ENCODE measurements at regions of chr2 and their contacts with region 1.

Region 1: DNA sequence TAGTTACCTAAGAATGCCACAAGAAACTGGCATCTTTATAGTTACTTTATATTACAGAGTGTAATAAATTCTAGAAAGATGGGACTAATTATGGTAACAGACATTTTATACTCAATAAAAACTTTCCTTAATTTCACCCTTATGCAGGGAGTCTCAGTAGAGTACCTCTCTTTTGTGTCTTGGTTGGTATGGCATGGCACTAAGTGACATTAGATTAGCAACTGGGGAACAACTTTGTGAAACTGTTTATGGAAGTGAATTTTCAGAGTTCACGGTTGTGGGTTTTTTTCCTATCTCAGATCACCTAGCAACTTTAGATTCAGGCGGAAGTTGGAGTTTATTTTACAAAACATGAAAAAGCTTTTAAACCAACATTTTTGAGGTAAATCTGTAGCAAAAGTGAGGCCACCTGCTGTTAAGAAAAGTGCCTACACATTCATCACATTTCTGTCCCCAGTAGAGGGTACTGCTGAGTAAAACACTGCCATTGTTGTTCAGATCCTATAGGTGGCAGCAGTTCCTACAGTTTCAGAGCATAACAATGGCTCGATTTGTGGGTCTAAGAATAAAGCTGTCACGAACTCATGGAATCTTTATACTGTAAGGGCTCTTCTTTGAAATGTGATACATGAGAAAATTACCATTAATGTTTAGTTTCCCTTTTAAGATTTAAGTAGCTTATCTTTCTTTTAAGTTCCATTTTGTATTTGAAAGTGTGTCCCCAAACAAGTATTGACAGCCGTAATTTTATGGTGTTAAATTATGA is 117.6 kb downstream of the CAMKMT start:
- DNase-seq: peak in 8 of 9 donors; percentile 23 to 79 (median 68)
- ATAC-seq: peak; percentile 100
- H3K4me3 ChIP-seq: no peak overlapping the region
- H3K4me3 Mint-ChIP-seq: peak overlapping the region in 1 of 10 donors; percentile 8
- H3K27ac ChIP-seq: no peak overlapping the region
- H3K27ac Mint-ChIP-seq: peak overlapping the region in 5 of 9 donors; percentile 5 to 55 (median 38)
- H3K4me1 ChIP-seq: peaks cover 0 to 4% of the 10 kb centered on the region in 2 donors
- H3K4me1 Mint-ChIP-seq: peaks cover 0 to 11% (median 6%) of the 10 kb centered on the region in 7 donors
- H3K27me3 ChIP-seq: no peaks in the 10 kb centered on the region
- H3K27me3 Mint-ChIP-seq: no peaks in the 10 kb centered on the region

Region 2: GRCh38 chr2:43995733-43996533 is 483.4 kb before region 1 on chr2 and contains the start of gene LRPPRC:
- CTCF ChIA-PET with region 1: no interaction called
- POLR2A ChIA-PET with region 1: no interaction called
- intact Hi-C with region 1: no loop called
- DNase-seq: peak; percentile 69 to 95 (median 90)
- ATAC-seq: peak; percentile 98
- H3K4me3 ChIP-seq: peak within 1 kb of the TSS; percentile 98
- H3K4me3 Mint-ChIP-seq: peak within 1 kb of the TSS; percentile 89 to 99 (median 90)
- H3K27ac ChIP-seq: peak within 1 kb of the TSS; percentile 84
- H3K27ac Mint-ChIP-seq: peak within 1 kb of the TSS; percentile 95 to 100 (median 97)
- H3K4me1 ChIP-seq: peaks cover 9 to 25% of the 10 kb centered on the region in 2 donors
- H3K4me1 Mint-ChIP-seq: peaks cover 34 to 62% (median 52%) of the 10 kb centered on the region in 7 donors
- H3K27me3 ChIP-seq: no peaks in the 10 kb centered on the region
- H3K27me3 Mint-ChIP-seq: peaks cover 0 to 1% (median 0%) of the 10 kb centered on the region in 5 donors
- total RNA-seq, gene LRPPRC: 54.3 to 92.7 (median 71.2) TPM

Region 3: GRCh38 chr2:44244129-44244871 is 235.0 kb before region 1 on chr2:
- CTCF ChIA-PET with region 1: no interaction called
- POLR2A ChIA-PET with region 1: no interaction called
- intact Hi-C with region 1: loop called in 1 of 2 experiments (anchors 1 kb)
- DNase-seq: peak; percentile 12 to 75 (median 64)
- ATAC-seq: peak; percentile 96
- H3K4me3 ChIP-seq: peak overlapping the region; percentile 55
- H3K4me3 Mint-ChIP-seq: peak overlapping the region; percentile 71 to 95 (median 87)
- H3K27ac ChIP-seq: peak overlapping the region; percentile 64
- H3K27ac Mint-ChIP-seq: peak overlapping the region in 8 of 9 donors; percentile 39 to 89 (median 74)
- H3K4me1 ChIP-seq: peaks cover 6 to 9% of the 10 kb centered on the region in 2 donors
- H3K4me1 Mint-ChIP-seq: peaks cover 7 to 41% (median 33%) of the 10 kb centered on the region in 7 donors
- H3K27me3 ChIP-seq: no peaks in the 10 kb centered on the region
- H3K27me3 Mint-ChIP-seq: peaks cover 0 to 7% (median 0%) of the 10 kb centered on the region in 5 donors

Region 4: DNA sequence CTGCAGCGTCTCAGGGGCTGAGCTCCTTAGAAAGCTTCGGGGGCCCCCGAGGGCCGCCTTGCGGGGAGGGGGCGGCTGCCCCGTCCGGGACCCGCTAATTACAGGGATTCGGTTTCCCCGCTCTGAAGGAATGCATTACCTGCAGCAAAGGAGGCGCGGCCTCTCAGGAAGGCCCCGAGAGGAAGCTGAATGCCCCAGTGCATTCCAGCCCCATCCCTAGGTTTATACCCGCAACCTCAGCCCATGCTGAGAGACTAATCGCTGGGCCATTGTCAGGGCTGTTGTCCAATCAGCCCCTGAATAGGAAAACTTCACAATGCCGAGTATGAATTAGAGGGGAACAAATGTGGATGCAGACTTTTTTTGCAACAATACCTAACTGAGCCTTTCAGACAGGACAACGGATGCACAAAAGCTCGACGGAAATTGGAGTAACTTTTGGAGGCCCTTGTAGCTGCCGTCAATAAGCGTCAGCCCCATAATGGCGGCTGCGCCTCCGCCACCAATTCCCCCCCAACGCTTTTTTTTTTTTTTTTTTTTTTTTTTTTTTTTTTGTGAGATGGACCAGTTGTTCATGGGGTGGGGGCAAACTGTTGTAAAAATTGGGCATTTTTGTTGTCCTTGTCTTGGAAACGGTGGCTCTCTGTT is 323.6 kb after region 1 on chr2:
- CTCF ChIA-PET with region 1: no interaction called
- POLR2A ChIA-PET with region 1: no interaction called
- intact Hi-C with region 1: loop called in 1 of 2 experiments (anchors 10 kb)
- DNase-seq: no peak
- ATAC-seq: no peak
- H3K4me3 ChIP-seq: no peak overlapping the region
- H3K4me3 Mint-ChIP-seq: peak overlapping the region in 7 of 10 donors; percentile 18 to 80 (median 36)
- H3K27ac ChIP-seq: no peak overlapping the region
- H3K27ac Mint-ChIP-seq: no peak overlapping the region
- H3K4me1 ChIP-seq: peaks cover 0 to 7% of the 10 kb centered on the region in 2 donors
- H3K4me1 Mint-ChIP-seq: peaks cover 0 to 23% (median 18%) of the 10 kb centered on the region in 7 donors
- H3K27me3 ChIP-seq: peaks cover 4 to 23% of the 10 kb centered on the region in 2 donors
- H3K27me3 Mint-ChIP-seq: peaks cover 77 to 91% (median 87%) of the 10 kb centered on the region in 5 donors

Region 5: DNA sequence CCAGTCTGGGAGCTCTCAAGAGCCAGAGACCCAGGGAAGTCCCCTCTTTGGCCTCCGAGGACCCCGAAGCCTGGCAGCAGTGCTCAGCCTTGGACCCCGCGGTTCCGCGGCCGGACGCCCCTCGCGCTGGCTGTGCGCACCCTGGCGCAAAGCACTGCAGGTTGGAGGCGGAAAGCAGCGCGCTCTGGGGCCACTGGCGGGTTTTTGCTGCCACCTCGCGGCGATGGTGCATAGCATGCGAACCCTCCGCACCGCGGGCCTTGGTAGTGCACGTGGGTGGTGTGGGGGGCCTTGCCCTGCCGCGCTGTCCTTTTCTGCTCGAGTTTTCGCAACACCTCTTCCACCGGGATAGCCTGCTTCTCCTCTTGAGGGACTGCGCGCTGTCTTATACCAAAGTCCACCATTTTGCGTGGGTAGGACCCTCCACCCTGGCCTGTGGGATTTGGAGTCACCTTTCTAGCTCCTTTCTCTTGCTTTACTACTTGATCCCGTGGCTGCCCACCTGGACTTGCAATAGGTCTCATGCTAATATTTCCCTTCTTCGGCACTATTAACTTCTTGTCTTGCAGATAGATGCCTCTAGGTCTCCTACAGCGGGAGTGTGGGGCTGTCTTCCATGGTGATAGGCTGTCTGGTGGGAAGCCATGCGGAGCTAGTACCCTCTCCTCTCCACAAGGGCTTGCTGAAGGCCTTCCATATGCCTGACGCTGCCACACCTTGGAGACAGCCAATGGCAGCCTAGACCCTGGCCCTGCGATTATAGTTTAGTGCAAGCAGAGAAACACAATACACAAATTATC is 476.5 kb after region 1 on chr2:
- CTCF ChIA-PET with region 1: interaction called, 16 read pairs
- POLR2A ChIA-PET with region 1: no interaction called
- intact Hi-C with region 1: loop called (anchors 1 kb)
- DNase-seq: peak; percentile 25 to 80 (median 64)
- ATAC-seq: peak; percentile 79
- H3K4me3 ChIP-seq: no peak overlapping the region
- H3K4me3 Mint-ChIP-seq: peak overlapping the region in 7 of 10 donors; percentile 5 to 72 (median 35)
- H3K27ac ChIP-seq: no peak overlapping the region
- H3K27ac Mint-ChIP-seq: peak overlapping the region in 1 of 9 donors; percentile 62
- H3K4me1 ChIP-seq: peaks cover 0 to 10% of the 10 kb centered on the region in 2 donors
- H3K4me1 Mint-ChIP-seq: peaks cover 13 to 32% (median 20%) of the 10 kb centered on the region in 7 donors
- H3K27me3 ChIP-seq: no peaks in the 10 kb centered on the region
- H3K27me3 Mint-ChIP-seq: peaks cover 50 to 77% (median 65%) of the 10 kb centered on the region in 5 donors

Region 6: GRCh38 chr2:45494269-45494977 is 1015.1 kb after region 1 on chr2:
- CTCF ChIA-PET with region 1: no interaction called
- POLR2A ChIA-PET with region 1: no interaction called
- intact Hi-C with region 1: loop called in 1 of 2 experiments (anchors 10 kb)
- DNase-seq: peak in 6 of 9 donors; percentile 17 to 46 (median 28)
- ATAC-seq: peak; percentile 65
- H3K4me3 ChIP-seq: no peak overlapping the region
- H3K4me3 Mint-ChIP-seq: no peak overlapping the region
- H3K27ac ChIP-seq: no peak overlapping the region
- H3K27ac Mint-ChIP-seq: peak overlapping the region in 2 of 9 donors; percentile 23 to 33
- H3K4me1 ChIP-seq: no peaks in the 10 kb centered on the region
- H3K4me1 Mint-ChIP-seq: peaks cover 3 to 17% (median 10%) of the 10 kb centered on the region in 7 donors
- H3K27me3 ChIP-seq: no peaks in the 10 kb centered on the region
- H3K27me3 Mint-ChIP-seq: no peaks in the 10 kb centered on the region

Region 7: GRCh38 chr2:45578056-45578809 is 1098.9 kb after region 1 on chr2:
- CTCF ChIA-PET with region 1: no interaction called
- POLR2A ChIA-PET with region 1: no interaction called
- intact Hi-C with region 1: loop called in 1 of 2 experiments (anchors 10 kb)
- DNase-seq: peak in 7 of 9 donors; percentile 15 to 43 (median 27)
- ATAC-seq: peak; percentile 83
- H3K4me3 ChIP-seq: no peak overlapping the region
- H3K4me3 Mint-ChIP-seq: no peak overlapping the region
- H3K27ac ChIP-seq: no peak overlapping the region
- H3K27ac Mint-ChIP-seq: peak overlapping the region in 1 of 9 donors; percentile 12
- H3K4me1 ChIP-seq: no peaks in the 10 kb centered on the region
- H3K4me1 Mint-ChIP-seq: peaks cover 0 to 9% (median 4%) of the 10 kb centered on the region in 7 donors
- H3K27me3 ChIP-seq: no peaks in the 10 kb centered on the region
- H3K27me3 Mint-ChIP-seq: no peaks in the 10 kb centered on the region